Activated naive CD4-positive, alpha-beta T cell treated with anti-CD3 and anti-CD28 coated beads for 36 hours (primary cell): ENCODE measurements at regions of chr1 and their contacts with region 1.

Region 1: GRCh38 chr1:84156210-84156621 is 12.1 kb downstream of the PRKACB start:
- DNase-seq: peak; percentile 19
- H3K4me3 Mint-ChIP-seq: peak overlapping the region; percentile 18
- H3K27ac Mint-ChIP-seq: peak overlapping the region; percentile 64
- H3K4me1 Mint-ChIP-seq: peaks cover 83% of the 10 kb centered on the region
- H3K27me3 Mint-ChIP-seq: no peaks in the 10 kb centered on the region

Region 2: GRCh38 chr1:84166797-84167196 is 10.6 kb after region 1 on chr1:
- CTCF ChIA-PET with region 1: interaction called, 3 read pairs
- intact Hi-C with region 1: loop called (anchors 1 kb)
- DNase-seq: no peak
- H3K4me3 Mint-ChIP-seq: no peak overlapping the region
- H3K27ac Mint-ChIP-seq: no peak overlapping the region
- H3K4me1 Mint-ChIP-seq: peaks cover 72% of the 10 kb centered on the region
- H3K27me3 Mint-ChIP-seq: no peaks in the 10 kb centered on the region

Region 3: GRCh38 chr1:84298328-84298683 is 142.1 kb after region 1 on chr1:
- CTCF ChIA-PET with region 1: no interaction called
- intact Hi-C with region 1: loop called (anchors 2 kb)
- DNase-seq: peak; percentile 54
- H3K4me3 Mint-ChIP-seq: peak overlapping the region; percentile 81
- H3K27ac Mint-ChIP-seq: peak overlapping the region; percentile 28
- H3K4me1 Mint-ChIP-seq: peaks cover 35% of the 10 kb centered on the region
- H3K27me3 Mint-ChIP-seq: no peaks in the 10 kb centered on the region

Region 4: GRCh38 chr1:84598846-84599741 is 442.9 kb after region 1 on chr1:
- CTCF ChIA-PET with region 1: no interaction called
- intact Hi-C with region 1: loop called (anchors 2 kb)
- DNase-seq: no peak
- H3K4me3 Mint-ChIP-seq: no peak overlapping the region
- H3K27ac Mint-ChIP-seq: peak overlapping the region; percentile 70
- H3K4me1 Mint-ChIP-seq: peaks cover 31% of the 10 kb centered on the region
- H3K27me3 Mint-ChIP-seq: no peaks in the 10 kb centered on the region